Activated CD4-positive, alpha-beta T cell treated with anti-CD3 and anti-CD28 coated beads, Interleukin-2, amount 10 ng/mL, durations not matched to agents 24 days and 14 days (primary cell): ENCODE measurements at regions of chr1 and their contacts with region 1.

Region 1: GRCh38 chr1:179081687-179082332 is at the start of gene TOR3A:
- DNase-seq: peak; percentile 95
- H3K4me3 Mint-ChIP-seq: peak within 1 kb of the TSS; percentile 95
- H3K27ac Mint-ChIP-seq: peak within 1 kb of the TSS; percentile 96
- H3K4me1 Mint-ChIP-seq: peaks cover 25% of the 10 kb centered on the region
- H3K27me3 Mint-ChIP-seq: no peaks in the 10 kb centered on the region
- total RNA-seq, gene TOR3A: 41.6 and 44.3 TPM in 2 replicates

Region 2: DNA sequence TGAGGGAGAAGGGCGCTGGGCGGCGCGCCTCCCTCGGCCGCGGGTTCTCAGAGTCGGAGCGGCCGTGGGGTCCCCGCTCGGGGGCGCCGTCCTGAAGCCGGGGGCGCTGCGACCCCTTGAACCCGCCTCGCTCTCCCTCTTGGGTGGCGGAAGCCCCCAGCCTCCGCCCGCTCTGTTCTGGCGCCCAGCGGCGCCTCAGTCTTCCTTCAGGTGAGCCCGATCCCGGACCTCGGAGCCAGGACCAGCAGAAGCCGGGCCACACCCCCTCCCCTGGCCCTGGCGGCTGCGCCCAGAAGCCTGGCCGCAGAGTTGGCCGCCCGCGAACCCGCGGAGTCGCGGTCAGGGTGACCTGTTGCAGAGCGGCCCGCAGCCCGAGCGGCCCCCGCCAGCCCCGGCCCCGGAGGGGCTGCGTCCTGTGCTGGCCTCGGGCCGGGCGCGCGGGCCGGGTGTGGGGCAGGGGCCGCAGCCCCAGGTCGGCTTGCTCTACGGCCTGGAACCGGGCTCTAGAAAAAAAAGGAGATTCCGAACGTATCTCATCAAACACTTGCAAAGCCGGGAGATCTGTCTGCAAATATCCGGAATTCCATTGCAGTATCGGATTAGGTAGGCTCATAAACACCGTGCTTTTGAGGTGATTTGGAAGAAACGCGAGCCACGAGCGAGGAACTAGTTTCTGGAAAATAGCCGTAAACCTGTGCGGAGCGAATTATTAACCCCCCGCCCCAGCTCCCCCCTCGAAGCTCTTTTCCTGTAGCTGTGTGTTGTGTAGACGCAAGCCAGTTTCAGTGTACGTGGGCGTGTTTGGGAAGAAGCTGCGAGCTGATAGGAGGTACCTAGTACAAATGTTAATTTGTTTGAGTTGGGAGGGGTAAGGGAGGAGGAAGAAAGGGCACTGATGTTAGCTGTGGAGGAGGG is 355.9 kb before region 1 on chr1:
- intact Hi-C with region 1: loop called (anchors 5 kb)
- DNase-seq: peak; percentile 87
- H3K4me3 Mint-ChIP-seq: peak overlapping the region; percentile 86
- H3K27ac Mint-ChIP-seq: peak overlapping the region; percentile 72
- H3K4me1 Mint-ChIP-seq: peaks cover 9% of the 10 kb centered on the region
- H3K27me3 Mint-ChIP-seq: peaks cover 15% of the 10 kb centered on the region

Region 3: DNA sequence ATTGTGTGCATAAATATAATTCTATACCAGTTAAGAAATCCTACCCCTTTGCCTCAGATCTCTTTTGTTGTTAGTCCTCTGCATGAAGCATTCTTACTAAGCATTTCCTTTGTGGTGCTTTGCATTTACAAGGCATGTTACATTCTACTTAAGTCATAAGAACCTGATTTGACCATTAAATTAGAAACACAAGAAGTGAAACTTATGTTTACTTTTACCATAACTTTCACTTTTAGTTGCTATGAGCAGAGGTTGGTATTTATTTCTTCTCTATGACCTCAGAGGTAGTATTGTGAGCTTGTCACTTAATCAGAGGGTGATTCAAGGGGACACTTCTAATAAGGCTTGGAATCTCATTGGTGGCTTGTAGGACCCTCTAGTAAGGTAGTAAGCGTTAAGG is 47.1 kb before region 1 on chr1:
- intact Hi-C with region 1: loop called (anchors 1 kb)
- DNase-seq: no peak
- H3K4me3 Mint-ChIP-seq: peak overlapping the region; percentile 62
- H3K27ac Mint-ChIP-seq: peak overlapping the region; percentile 91
- H3K4me1 Mint-ChIP-seq: peaks cover 70% of the 10 kb centered on the region
- H3K27me3 Mint-ChIP-seq: no peaks in the 10 kb centered on the region

Region 4: DNA sequence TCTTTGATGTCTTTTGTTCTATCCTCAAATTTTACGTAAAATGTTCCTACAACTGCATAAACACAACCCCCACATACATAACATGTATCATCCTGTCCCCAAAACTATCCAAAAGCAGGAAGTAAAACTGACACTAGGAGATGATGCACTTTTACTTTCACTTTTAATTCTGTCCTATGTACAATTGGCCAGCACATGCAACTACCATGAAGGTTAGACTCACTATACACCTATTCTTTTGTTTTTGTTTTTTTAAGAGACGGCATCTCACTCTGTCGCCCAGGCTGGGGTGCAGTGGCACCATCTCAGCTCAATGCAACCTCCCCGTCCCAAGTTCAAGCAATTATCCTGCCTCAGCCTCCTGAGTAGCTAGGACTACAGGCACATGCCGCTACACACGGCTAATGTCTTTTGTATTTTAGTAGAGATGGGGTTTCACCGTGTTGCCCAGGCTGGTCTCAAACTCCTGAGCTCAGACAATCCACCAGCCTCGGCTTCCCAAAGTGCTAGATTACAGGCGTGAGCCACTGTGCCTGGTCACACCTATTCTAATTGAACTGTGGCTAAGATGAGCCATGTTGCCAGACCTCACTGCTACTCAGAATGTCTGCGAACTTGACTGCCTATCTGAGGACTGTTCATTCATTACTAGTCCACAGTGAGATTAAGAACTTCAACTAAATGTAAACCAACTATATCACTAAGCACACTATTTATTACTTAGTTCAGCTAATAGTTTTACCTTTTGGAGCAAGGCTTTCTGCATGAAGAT is 48.1 kb after region 1 on chr1:
- intact Hi-C with region 1: loop called (anchors 1 kb)
- DNase-seq: peak; percentile 78
- H3K4me3 Mint-ChIP-seq: peak overlapping the region; percentile 85
- H3K27ac Mint-ChIP-seq: peak overlapping the region; percentile 97
- H3K4me1 Mint-ChIP-seq: peaks cover 26% of the 10 kb centered on the region
- H3K27me3 Mint-ChIP-seq: no peaks in the 10 kb centered on the region

Region 5: GRCh38 chr1:179194068-179194537 is 112.3 kb after region 1 on chr1:
- intact Hi-C with region 1: loop called (anchors 2 kb)
- DNase-seq: no peak
- H3K4me3 Mint-ChIP-seq: no peak overlapping the region
- H3K27ac Mint-ChIP-seq: no peak overlapping the region
- H3K4me1 Mint-ChIP-seq: peaks cover 16% of the 10 kb centered on the region
- H3K27me3 Mint-ChIP-seq: no peaks in the 10 kb centered on the region

Region 6: DNA sequence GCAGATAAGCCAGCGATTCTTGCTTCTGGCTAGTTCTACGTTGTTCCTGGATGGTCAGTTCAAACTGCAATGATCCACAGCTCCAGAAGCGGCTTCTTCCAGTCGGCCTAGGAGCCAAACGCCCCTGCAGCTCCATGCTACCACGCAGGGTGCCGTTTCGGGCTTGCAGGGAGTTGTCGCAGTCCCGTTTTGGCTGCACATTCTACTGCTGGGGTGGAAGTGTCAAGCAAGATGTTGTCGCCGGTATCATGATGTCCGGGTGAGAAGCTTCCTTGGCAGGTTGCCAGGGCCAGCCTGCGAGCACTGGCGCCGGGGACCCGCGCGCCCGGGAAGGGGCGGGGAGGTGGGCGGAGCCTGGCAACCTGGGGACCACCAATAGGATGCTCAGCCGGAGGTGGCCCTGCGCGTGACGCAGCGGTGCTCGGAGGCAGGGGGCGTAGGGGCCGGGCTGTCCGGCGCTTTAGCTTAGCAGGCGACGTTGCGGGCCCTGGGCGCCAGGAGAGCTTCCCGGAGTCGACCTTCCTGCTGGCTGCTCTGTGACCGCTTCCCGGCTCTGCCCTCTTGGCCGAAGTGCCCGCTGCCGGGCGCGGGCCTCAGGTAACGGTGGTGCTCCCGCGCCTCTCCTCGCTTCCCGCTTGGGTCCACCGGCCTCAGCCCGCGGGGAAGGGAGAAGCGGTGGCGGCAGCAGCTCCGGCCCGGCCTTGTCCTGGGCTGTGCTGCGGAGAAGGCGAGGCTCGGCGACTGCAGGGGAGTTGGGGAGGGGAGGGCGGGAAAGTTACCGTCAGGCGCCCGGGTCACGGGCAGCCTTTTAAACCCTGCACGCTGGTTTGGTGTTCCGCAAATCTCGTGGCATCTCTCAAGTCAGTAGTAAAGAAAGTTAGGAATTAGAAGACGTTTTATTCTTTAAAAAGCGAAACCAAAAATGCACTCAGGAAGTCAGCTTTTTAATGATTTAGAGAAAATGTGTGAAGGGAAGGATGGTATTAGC is 211.8 kb after region 1 on chr1 and contains the start of gene SOAT1:
- intact Hi-C with region 1: loop called (anchors 1 kb)
- DNase-seq: peak; percentile 98
- H3K4me3 Mint-ChIP-seq: peak within 1 kb of the TSS; percentile 89
- H3K27ac Mint-ChIP-seq: peak within 1 kb of the TSS; percentile 83
- H3K4me1 Mint-ChIP-seq: peaks cover 33% of the 10 kb centered on the region
- H3K27me3 Mint-ChIP-seq: no peaks in the 10 kb centered on the region
- total RNA-seq, gene SOAT1: 52.2 and 54.4 TPM in 2 replicates

Region 7: GRCh38 chr1:179882243-179883039 is 800.6 kb after region 1 on chr1 and contains the start of gene TOR1AIP1:
- intact Hi-C with region 1: loop called (anchors 5 kb)
- DNase-seq: peak; percentile 99
- H3K4me3 Mint-ChIP-seq: peak within 1 kb of the TSS; percentile 94
- H3K27ac Mint-ChIP-seq: peak within 1 kb of the TSS; percentile 99
- H3K4me1 Mint-ChIP-seq: peaks cover 45% of the 10 kb centered on the region
- H3K27me3 Mint-ChIP-seq: no peaks in the 10 kb centered on the region
- total RNA-seq, gene TOR1AIP1: 69.2 and 77.2 TPM in 2 replicates